ENCODE measurements at regions of chr1 and their contacts with region 1.

Region 1: GRCh38 chr1:33086384-33086850 is 5.5 kb downstream of the AZIN2 start:
- DNase-seq: peak; percentile 56 to 85 (median 60)
- ATAC-seq: peak; percentile 95
- H3K4me3 ChIP-seq: no peak overlapping the region
- H3K27ac ChIP-seq: no peak overlapping the region
- H3K4me1 ChIP-seq: peaks cover 6 to 7% of the 10 kb centered on the region in 2 experiments; a peak in 3 of 5 replicates
- H3K27me3 ChIP-seq: peaks cover 23 to 50% of the 10 kb centered on the region in 2 experiments; a peak in 4 of 5 replicates
- CTCF ChIP-seq: peak; percentile 87 to 92 (median 90)
- EP300 ChIP-seq: no peak
- POLR2A ChIP-seq: no peak
- RAD21 ChIP-seq: peak; percentile 88 to 95

Region 2: DNA sequence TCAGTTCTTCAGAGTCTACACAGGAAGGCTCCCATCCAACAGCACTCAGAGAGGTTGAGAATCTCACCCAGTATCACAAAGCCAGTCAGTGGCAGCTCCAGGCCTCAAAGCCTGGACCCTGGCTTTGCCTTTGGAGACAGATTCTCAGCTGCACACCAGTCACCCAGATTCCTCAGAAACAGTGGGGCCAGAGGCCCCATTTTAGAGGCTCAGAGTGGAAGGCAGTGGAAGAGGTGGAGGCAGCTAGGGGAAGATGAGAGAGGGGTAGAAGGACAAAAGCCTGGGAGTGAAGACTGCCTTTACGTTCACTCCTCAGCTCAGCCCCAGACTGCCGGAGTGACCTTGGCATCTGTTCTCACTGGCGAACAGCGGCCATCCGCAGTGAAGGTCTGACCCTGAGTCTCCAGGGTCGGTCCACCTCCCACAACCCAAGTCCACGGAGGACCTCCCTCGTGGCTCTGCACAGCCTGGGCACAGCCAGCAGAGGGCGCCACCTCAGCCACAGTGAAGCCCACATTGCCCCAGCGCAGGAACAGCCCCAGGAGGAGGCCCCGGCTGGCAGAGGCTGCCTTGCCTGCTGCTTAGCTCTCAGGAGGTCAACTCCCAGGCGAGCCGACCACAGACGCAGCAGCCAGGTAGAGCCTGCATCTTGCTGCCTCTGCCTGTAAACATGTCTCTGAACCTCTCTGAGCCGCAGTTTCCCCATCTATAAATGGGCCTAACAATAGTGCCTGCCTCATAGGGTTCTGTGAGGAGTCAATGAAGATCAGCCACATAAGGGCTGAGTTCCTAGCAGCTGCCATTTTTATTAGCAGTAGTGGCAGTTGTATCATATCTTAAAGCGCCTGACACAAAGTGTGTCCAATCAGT is 209.8 kb before region 1 on chr1:
- CTCF ChIA-PET with region 1: interaction called, 29 read pairs
- POLR2A ChIA-PET with region 1: interaction called, 4 read pairs
- in situ Hi-C with region 1: no loop called
- intact Hi-C with region 1: loop called (anchors 2 kb)
- DNase-seq: peak; percentile 72 to 89 (median 86)
- ATAC-seq: peak; percentile 85
- H3K4me3 ChIP-seq: no peak overlapping the region
- H3K27ac ChIP-seq: no peak overlapping the region
- H3K4me1 ChIP-seq: peaks cover 2 to 6% of the 10 kb centered on the region in 2 experiments; a peak in 3 of 5 replicates
- H3K27me3 ChIP-seq: peaks cover 15 to 39% of the 10 kb centered on the region in 2 experiments; a peak in 4 of 5 replicates
- CTCF ChIP-seq: peak; percentile 86 to 99 (median 90)
- EP300 ChIP-seq: no peak
- POLR2A ChIP-seq: no peak
- RAD21 ChIP-seq: peak; percentile 65 to 85

Region 3: GRCh38 chr1:32892368-32893197 is 193.8 kb before region 1 on chr1:
- CTCF ChIA-PET with region 1: interaction called, 15 read pairs
- POLR2A ChIA-PET with region 1: interaction called, 4 read pairs
- in situ Hi-C with region 1: no loop called
- intact Hi-C with region 1: no loop called
- DNase-seq: peak; percentile 78 to 88 (median 85)
- ATAC-seq: peak; percentile 94
- H3K4me3 ChIP-seq: peak overlapping the region; percentile 42
- H3K27ac ChIP-seq: no peak overlapping the region
- H3K4me1 ChIP-seq: peaks cover 5 to 18% of the 10 kb centered on the region in 2 experiments; a peak in 3 of 5 replicates
- H3K27me3 ChIP-seq: peaks cover 5 to 67% of the 10 kb centered on the region in 2 experiments; a peak in 3 of 5 replicates
- CTCF ChIP-seq: peak; percentile 75 to 99 (median 94)
- EP300 ChIP-seq: no peak
- POLR2A ChIP-seq: no peak
- RAD21 ChIP-seq: peak in 1 of 2 experiments; percentile 55; a peak in 2 of 4 replicates

Region 4: GRCh38 chr1:32933742-32934322 is 152.6 kb before region 1 on chr1:
- CTCF ChIA-PET with region 1: interaction called, 12 read pairs
- POLR2A ChIA-PET with region 1: interaction called, 3 read pairs
- in situ Hi-C with region 1: no loop called
- intact Hi-C with region 1: loop called (anchors 1 kb)
- DNase-seq: peak in 1 of 4 experiments; percentile 27
- ATAC-seq: peak; percentile 25; the same call in 2 of the 3 replicates
- H3K4me3 ChIP-seq: no peak overlapping the region
- H3K27ac ChIP-seq: no peak overlapping the region
- H3K4me1 ChIP-seq: peaks cover 0 to 6% of the 10 kb centered on the region in 2 experiments; a peak in 3 of 5 replicates
- H3K27me3 ChIP-seq: peaks cover 4 to 5% of the 10 kb centered on the region in 2 experiments; a peak in 3 of 5 replicates
- CTCF ChIP-seq: no peak
- EP300 ChIP-seq: no peak
- POLR2A ChIP-seq: no peak
- RAD21 ChIP-seq: no peak